A549 (cell line): ENCODE measurements at regions of chr1 and their contacts with region 1.

Region 1: GRCh38 chr1:48109390-48110013 is 112.3 kb upstream of the TRABD2B start:
- DNase-seq: peak in 1 of 2 experiments; percentile 43
- ATAC-seq: peak; percentile 66 to 85; a peak in 5 of 6 replicates
- H3K4me3 ChIP-seq: no peak overlapping the region
- H3K27ac ChIP-seq: no peak overlapping the region
- H3K4me1 ChIP-seq: no peaks in the 10 kb centered on the region
- CTCF ChIP-seq: peak; percentile 76
- EP300 ChIP-seq: no peak
- POLR2A ChIP-seq: no peak
- RAD21 ChIP-seq: peak; percentile 69 to 79

Region 2: GRCh38 chr1:48160486-48161132 is 51.1 kb after region 1 on chr1:
- CTCF ChIA-PET with region 1: no interaction called
- POLR2A ChIA-PET with region 1: no interaction called
- DNase-seq: no peak
- ATAC-seq: no peak
- H3K4me3 ChIP-seq: no peak overlapping the region
- H3K27ac ChIP-seq: no peak overlapping the region
- H3K4me1 ChIP-seq: no peaks in the 10 kb centered on the region
- CTCF ChIP-seq: no peak
- EP300 ChIP-seq: no peak
- POLR2A ChIP-seq: no peak
- RAD21 ChIP-seq: no peak

Region 3: GRCh38 chr1:48202030-48202752 is 92.7 kb after region 1 on chr1:
- CTCF ChIA-PET with region 1: interaction called, 29 read pairs
- POLR2A ChIA-PET with region 1: no interaction called
- DNase-seq: peak; percentile 21 to 58
- ATAC-seq: peak; percentile 68 to 87
- H3K4me3 ChIP-seq: no peak overlapping the region
- H3K27ac ChIP-seq: no peak overlapping the region
- H3K4me1 ChIP-seq: no peaks in the 10 kb centered on the region
- CTCF ChIP-seq: peak; percentile 64
- EP300 ChIP-seq: no peak
- POLR2A ChIP-seq: no peak
- RAD21 ChIP-seq: peak; percentile 55 to 68; a peak in 4 of 5 replicates

Region 4: GRCh38 chr1:48214820-48215219 is 105.3 kb after region 1 on chr1:
- CTCF ChIA-PET with region 1: no interaction called
- POLR2A ChIA-PET with region 1: no interaction called
- DNase-seq: no peak
- ATAC-seq: no peak
- H3K4me3 ChIP-seq: no peak overlapping the region
- H3K27ac ChIP-seq: no peak overlapping the region
- H3K4me1 ChIP-seq: no peaks in the 10 kb centered on the region
- CTCF ChIP-seq: no peak
- EP300 ChIP-seq: no peak
- POLR2A ChIP-seq: no peak
- RAD21 ChIP-seq: no peak